Endothelial cell of umbilical vein (primary cell): ENCODE measurements at regions of chr2 and their contacts with region 1.

Region 1: GRCh38 chr2:86440631-86441391 is at the start of gene KDM3A:
- DNase-seq: peak; percentile 100
- H3K4me3 ChIP-seq: peak within 1 kb of the TSS; percentile 58 to 99 (median 86)
- H3K27ac ChIP-seq: peak within 1 kb of the TSS; percentile 99
- H3K4me1 ChIP-seq: peaks cover 8% of the 10 kb centered on the region
- H3K27me3 ChIP-seq: no peaks in the 10 kb centered on the region
- CTCF ChIP-seq: no peak
- POLR2A ChIP-seq: no peak
- total RNA-seq, gene KDM3A: 29.5 and 35.4 TPM in 2 replicates

Region 2: DNA sequence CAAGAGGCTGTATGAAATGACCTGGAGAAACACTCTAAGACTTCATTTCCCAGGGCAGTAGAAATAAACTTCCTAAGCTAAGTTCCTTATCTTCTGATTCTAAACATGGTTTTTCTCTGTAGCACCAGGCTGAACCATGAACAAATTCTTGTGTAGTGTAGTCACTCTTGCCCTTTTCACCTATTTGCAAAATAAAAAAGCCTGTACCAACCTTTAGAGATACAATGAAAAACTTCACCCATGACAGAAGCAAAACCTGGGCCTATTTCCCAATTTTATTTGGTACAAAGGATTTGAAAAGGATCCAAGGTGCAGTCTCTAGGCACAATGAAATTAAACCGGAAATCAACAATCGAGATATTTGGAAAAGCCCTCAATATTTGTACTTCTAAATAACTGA is 378.8 kb before region 1 on chr2:
- CTCF ChIA-PET with region 1: no interaction called
- POLR2A ChIA-PET with region 1: no interaction called
- dilution Hi-C with region 1: no loop called
- intact Hi-C with region 1: no loop called
- DNase-seq: peak; percentile 80
- H3K4me3 ChIP-seq: no peak overlapping the region
- H3K27ac ChIP-seq: peak overlapping the region; percentile 55
- H3K4me1 ChIP-seq: peaks cover 20% of the 10 kb centered on the region
- H3K27me3 ChIP-seq: no peaks in the 10 kb centered on the region
- CTCF ChIP-seq: no peak
- POLR2A ChIP-seq: no peak

Region 3: GRCh38 chr2:86201671-86202335 is 239.0 kb before region 1 on chr2:
- CTCF ChIA-PET with region 1: no interaction called
- POLR2A ChIA-PET with region 1: no interaction called
- dilution Hi-C with region 1: no loop called
- intact Hi-C with region 1: loop called (anchors 1 kb)
- DNase-seq: peak; percentile 42
- H3K4me3 ChIP-seq: no peak overlapping the region
- H3K27ac ChIP-seq: no peak overlapping the region
- H3K4me1 ChIP-seq: peaks cover 11% of the 10 kb centered on the region
- H3K27me3 ChIP-seq: no peaks in the 10 kb centered on the region
- CTCF ChIP-seq: no peak
- POLR2A ChIP-seq: no peak

Region 4: GRCh38 chr2:86221066-86221684 is 219.6 kb before region 1 on chr2:
- CTCF ChIA-PET with region 1: interaction called, 14 read pairs
- POLR2A ChIA-PET with region 1: interaction called, 3 read pairs
- dilution Hi-C with region 1: no loop called
- intact Hi-C with region 1: loop called (anchors 1 kb)
- DNase-seq: peak; percentile 68
- H3K4me3 ChIP-seq: no peak overlapping the region
- H3K27ac ChIP-seq: no peak overlapping the region
- H3K4me1 ChIP-seq: peaks cover 7% of the 10 kb centered on the region
- H3K27me3 ChIP-seq: no peaks in the 10 kb centered on the region
- CTCF ChIP-seq: peak; percentile 85 to 92
- POLR2A ChIP-seq: no peak

Region 5: GRCh38 chr2:86396291-86396785 is 44.5 kb before region 1 on chr2:
- CTCF ChIA-PET with region 1: interaction called, 6 read pairs
- POLR2A ChIA-PET with region 1: no interaction called
- dilution Hi-C with region 1: no loop called
- intact Hi-C with region 1: loop called (anchors 2 kb)
- DNase-seq: peak; percentile 24
- H3K4me3 ChIP-seq: no peak overlapping the region
- H3K27ac ChIP-seq: no peak overlapping the region
- H3K4me1 ChIP-seq: no peaks in the 10 kb centered on the region
- H3K27me3 ChIP-seq: peaks cover 0 to 3% of the 10 kb centered on the region in 2 experiments
- CTCF ChIP-seq: peak; percentile 9 to 32
- POLR2A ChIP-seq: no peak

Region 6: DNA sequence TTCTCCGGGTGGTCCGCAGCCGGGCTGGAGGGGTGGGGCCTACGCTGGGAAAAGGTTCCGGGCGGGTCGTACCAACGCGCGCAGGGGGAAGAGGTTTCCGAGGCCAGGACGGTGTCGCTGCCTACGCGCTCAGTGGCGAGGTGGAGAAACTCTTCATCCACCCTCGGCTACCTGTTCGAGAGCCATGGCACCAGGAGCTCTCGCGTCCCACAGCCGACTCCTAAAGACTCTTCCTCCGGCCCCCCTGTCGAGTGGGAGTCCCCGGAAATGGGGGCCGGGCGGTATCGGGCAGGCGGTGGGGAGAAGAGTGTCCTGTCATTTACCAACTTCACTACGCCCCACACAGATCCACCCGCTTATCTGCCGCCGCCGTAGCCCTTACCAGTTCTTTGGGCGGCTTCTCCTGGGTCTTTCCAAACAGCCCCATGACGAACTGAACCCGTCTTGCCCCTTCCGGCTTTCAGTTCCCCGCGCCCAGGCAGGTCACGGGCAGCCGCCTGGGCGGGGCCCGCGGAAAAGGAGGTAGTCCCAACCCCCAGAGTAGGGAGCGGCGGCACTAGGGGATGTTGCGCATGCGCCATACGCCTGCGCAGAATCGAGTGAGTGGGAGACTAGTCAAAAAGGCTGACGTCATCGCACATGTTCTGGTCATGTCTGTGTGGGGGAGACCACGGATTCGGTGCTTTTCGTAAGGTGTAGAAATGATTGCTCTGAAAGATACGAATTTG is 122.3 kb after region 1 on chr2 and contains the start of gene CHMP3:
- CTCF ChIA-PET with region 1: interaction called, 3 read pairs
- POLR2A ChIA-PET with region 1: interaction called, 4 read pairs
- dilution Hi-C with region 1: no loop called
- intact Hi-C with region 1: loop called (anchors 2 kb)
- DNase-seq: peak; percentile 98
- H3K4me3 ChIP-seq: peak within 1 kb of the TSS; percentile 76 to 96 (median 78)
- H3K27ac ChIP-seq: peak within 1 kb of the TSS; percentile 97
- H3K4me1 ChIP-seq: peaks cover 6% of the 10 kb centered on the region
- H3K27me3 ChIP-seq: no peaks in the 10 kb centered on the region
- CTCF ChIP-seq: no peak
- POLR2A ChIP-seq: peak; percentile 84
- total RNA-seq, gene CHMP3: 86.3 and 92.2 TPM in 2 replicates

Region 7: GRCh38 chr2:86623651-86624541 is 183.1 kb after region 1 on chr2 and contains the start of gene RNF103:
- CTCF ChIA-PET with region 1: no interaction called
- POLR2A ChIA-PET with region 1: interaction called, 11 read pairs
- dilution Hi-C with region 1: no loop called
- intact Hi-C with region 1: loop called (anchors 1 kb)
- DNase-seq: peak; percentile 92
- H3K4me3 ChIP-seq: peak within 1 kb of the TSS; percentile 74 to 98 (median 78)
- H3K27ac ChIP-seq: peak within 1 kb of the TSS; percentile 94
- H3K4me1 ChIP-seq: peaks cover 15% of the 10 kb centered on the region
- H3K27me3 ChIP-seq: no peaks in the 10 kb centered on the region
- CTCF ChIP-seq: no peak
- POLR2A ChIP-seq: peak; percentile 94
- total RNA-seq, gene RNF103: 24.2 and 27.2 TPM in 2 replicates